ENCODE measurements at regions of chr19 and their contacts with region 1.

Region 1: GRCh38 chr19:55385740-55386529 is at the start of gene RPL28:
- DNase-seq: peak; percentile 99
- H3K4me3 Mint-ChIP-seq: peak within 1 kb of the TSS; percentile 100
- H3K27ac Mint-ChIP-seq: peak within 1 kb of the TSS; percentile 98
- H3K4me1 Mint-ChIP-seq: peaks cover 73% of the 10 kb centered on the region
- H3K27me3 Mint-ChIP-seq: no peaks in the 10 kb centered on the region
- total RNA-seq, gene RPL28: 3,004 to 3,026 TPM

Region 2: DNA sequence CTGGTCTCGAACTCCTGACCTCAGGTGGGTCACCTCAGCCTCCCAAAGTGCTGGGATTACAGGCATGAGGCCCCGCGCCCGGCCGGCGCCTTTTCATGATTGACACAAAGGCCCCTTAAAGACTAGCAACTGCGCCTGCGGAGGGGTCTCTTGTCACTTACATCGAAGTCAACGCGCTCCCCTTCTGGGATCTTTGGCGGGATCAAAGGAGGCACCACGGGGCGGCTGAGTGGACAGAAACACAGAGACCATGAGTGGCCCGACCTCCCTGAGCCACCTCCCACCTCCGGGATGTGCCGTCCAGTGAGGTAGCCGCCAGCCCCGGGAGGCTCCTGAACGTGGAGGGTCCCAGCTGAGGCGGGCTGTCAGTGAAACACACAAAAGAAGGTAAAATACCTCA is 244.2 kb before region 1 on chr19:
- CTCF ChIA-PET with region 1: interaction called, 11 read pairs
- POLR2A ChIA-PET with region 1: no interaction called
- DNase-seq: no peak
- H3K4me3 Mint-ChIP-seq: no peak overlapping the region
- H3K27ac Mint-ChIP-seq: no peak overlapping the region
- H3K4me1 Mint-ChIP-seq: peaks cover 9% of the 10 kb centered on the region
- H3K27me3 Mint-ChIP-seq: peaks cover 25% of the 10 kb centered on the region

Region 3: GRCh38 chr19:55289117-55289796 is 96.7 kb before region 1 on chr19:
- CTCF ChIA-PET with region 1: interaction called, 19 read pairs
- POLR2A ChIA-PET with region 1: no interaction called
- DNase-seq: no peak
- H3K4me3 Mint-ChIP-seq: no peak overlapping the region
- H3K27ac Mint-ChIP-seq: no peak overlapping the region
- H3K4me1 Mint-ChIP-seq: peaks cover 8% of the 10 kb centered on the region
- H3K27me3 Mint-ChIP-seq: peaks cover 2% of the 10 kb centered on the region

Region 4: DNA sequence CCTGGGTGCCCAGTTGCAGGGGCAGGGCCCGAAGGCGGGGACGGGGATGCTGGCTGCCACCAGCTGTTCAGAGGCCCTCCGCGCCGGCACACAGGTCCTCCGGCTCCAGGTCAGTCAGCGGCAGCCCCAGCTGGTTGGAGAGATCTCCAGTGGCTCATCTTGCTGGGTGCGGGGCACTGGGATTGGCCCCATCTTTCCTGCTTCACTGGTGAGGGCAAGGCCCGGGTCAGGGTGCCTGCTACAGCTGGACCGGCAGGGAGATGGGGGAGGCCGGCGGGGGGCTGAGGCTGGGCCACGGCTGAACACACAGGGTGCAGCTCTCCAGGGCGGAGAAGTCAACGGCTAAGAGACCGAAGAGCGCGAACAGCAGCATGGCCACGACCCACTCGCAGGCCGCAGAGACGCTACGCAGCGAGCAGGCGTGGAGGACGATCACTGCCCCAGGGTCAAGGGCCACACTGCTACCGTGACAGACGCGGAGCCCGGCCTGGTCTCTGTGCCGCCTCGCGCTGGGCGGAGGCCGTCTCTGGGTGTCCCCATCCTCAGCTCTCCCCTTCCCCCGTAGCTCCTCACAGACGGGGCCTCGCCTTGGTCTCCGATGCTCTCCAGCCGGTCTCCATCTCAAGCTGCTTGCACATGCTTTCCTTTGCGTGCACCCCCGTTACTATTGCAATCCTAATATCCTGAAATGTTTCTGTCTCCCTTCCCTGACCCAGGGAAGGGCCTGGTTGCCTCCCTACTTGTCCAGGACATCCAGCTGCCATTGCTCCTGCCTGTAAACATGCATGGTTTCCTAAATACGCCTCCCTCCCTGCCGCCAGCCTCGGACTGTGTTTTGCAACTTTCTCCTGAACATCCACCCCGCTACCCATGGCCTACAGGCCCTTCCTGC is 73.1 kb before region 1 on chr19:
- CTCF ChIA-PET with region 1: no interaction called
- POLR2A ChIA-PET with region 1: no interaction called
- DNase-seq: no peak
- H3K4me3 Mint-ChIP-seq: no peak overlapping the region
- H3K27ac Mint-ChIP-seq: no peak overlapping the region
- H3K4me1 Mint-ChIP-seq: no peaks in the 10 kb centered on the region
- H3K27me3 Mint-ChIP-seq: no peaks in the 10 kb centered on the region

Region 5: DNA sequence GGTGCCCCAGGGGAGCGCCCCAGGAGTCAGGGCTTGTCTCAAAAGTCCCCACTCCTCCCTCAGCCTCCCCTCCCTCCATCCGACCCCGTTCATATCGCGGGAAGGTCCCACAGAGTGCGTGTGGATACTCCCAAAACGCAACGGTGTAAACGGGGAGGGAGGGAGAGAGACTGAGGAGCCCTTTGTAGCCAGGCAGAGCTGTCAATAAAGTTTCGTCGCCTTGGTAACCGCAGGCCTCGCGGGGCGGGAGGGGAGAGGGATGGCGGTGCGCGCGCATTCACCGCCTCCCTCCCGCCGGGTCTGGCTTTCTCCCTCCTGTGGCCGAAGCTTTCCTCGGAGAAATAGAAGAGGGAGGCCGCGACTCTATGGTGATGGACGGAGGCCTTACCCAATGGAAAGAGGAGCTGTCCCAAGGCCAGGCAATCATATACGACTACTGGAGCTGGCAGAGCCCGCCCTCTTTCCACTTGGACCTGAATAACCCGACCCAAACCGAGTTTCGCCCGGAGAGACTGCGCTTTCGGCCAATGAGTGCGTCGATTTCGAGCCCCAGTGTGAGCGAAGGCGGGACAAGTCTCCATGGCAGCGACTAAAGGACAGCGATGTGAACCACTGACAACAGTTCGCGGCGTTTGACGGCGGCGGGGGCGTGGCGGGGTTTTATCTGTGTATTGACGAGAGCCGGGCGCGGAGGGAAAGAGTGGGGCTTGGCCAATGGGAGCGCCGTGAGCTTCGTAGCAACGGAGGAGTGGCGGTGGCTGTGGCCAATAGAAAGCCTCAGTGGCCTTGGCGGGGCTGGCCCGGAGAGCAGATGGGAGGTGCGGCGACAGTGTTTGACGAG is 46.7 kb before region 1 on chr19 and contains the start of gene KMT5C:
- CTCF ChIA-PET with region 1: interaction called, 10 read pairs
- POLR2A ChIA-PET with region 1: interaction called, 38 read pairs
- DNase-seq: peak; percentile 100
- H3K4me3 Mint-ChIP-seq: peak within 1 kb of the TSS; percentile 90
- H3K27ac Mint-ChIP-seq: peak within 1 kb of the TSS; percentile 91
- H3K4me1 Mint-ChIP-seq: peaks cover 19% of the 10 kb centered on the region
- H3K27me3 Mint-ChIP-seq: peaks cover 12% of the 10 kb centered on the region
- total RNA-seq, gene KMT5C: 27.2 to 28.9 TPM

Region 6: GRCh38 chr19:55353803-55354697 is 31.9 kb before region 1 on chr19:
- CTCF ChIA-PET with region 1: no interaction called
- POLR2A ChIA-PET with region 1: no interaction called
- DNase-seq: peak; percentile 71
- H3K4me3 Mint-ChIP-seq: peak overlapping the region; percentile 67
- H3K27ac Mint-ChIP-seq: no peak overlapping the region
- H3K4me1 Mint-ChIP-seq: peaks cover 34% of the 10 kb centered on the region
- H3K27me3 Mint-ChIP-seq: peaks cover 46% of the 10 kb centered on the region

Region 7: DNA sequence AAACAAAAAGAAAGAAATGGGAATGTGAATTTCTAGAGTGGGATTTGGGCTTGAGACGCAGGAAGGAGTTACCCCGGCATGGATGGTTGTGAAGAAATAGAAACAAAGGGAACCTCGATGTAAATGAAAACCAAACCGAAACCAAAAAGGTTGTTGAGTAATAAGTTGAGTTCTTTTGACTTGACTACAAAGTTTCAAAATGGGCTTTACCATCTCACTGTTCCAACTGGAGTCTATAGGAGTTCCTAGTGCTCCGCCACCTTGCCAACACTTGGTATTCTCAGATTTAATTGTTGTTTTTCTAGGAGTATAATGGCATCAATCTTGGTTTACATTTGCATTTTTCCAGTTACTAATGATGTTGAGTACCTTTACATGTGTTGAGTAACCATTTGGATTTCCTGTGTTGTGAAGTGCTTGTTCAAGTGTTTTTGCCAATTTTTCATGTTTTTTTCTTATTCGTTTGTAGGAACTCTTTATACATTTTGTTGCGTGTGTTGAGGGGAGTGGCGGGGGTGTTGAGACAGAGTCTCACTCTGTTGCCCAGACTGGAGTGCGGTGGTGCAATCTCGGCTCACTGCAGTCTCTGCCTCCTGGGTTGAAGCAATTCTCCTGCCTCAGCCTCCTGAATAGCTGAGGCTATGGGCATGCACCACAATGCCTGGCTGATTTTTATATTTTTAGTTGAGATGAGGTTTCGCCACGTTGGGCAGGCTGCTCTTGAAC is 12.4 kb after region 1 on chr19:
- CTCF ChIA-PET with region 1: interaction called, 6 read pairs
- POLR2A ChIA-PET with region 1: interaction called, 224 read pairs
- DNase-seq: no peak
- H3K4me3 Mint-ChIP-seq: peak overlapping the region; percentile 19
- H3K27ac Mint-ChIP-seq: peak overlapping the region; percentile 77
- H3K4me1 Mint-ChIP-seq: peaks cover 48% of the 10 kb centered on the region
- H3K27me3 Mint-ChIP-seq: no peaks in the 10 kb centered on the region